AG04449 (cell line): ENCODE measurements at regions of chrX and their contacts with region 1.

Region 1: GRCh38 chrX:41180194-41180908 is 95.1 kb downstream of the USP9X start:
- DNase-seq: peak; percentile 3
- H3K4me3 ChIP-seq: no peak overlapping the region
- CTCF ChIP-seq: peak; percentile 63

Region 2: GRCh38 chrX:41164449-41164848 is 15.9 kb before region 1 on chrX:
- CTCF ChIA-PET with region 1: interaction called, 41 read pairs
- POLR2A ChIA-PET with region 1: no interaction called
- DNase-seq: no peak
- H3K4me3 ChIP-seq: no peak overlapping the region
- CTCF ChIP-seq: no peak

Region 3: DNA sequence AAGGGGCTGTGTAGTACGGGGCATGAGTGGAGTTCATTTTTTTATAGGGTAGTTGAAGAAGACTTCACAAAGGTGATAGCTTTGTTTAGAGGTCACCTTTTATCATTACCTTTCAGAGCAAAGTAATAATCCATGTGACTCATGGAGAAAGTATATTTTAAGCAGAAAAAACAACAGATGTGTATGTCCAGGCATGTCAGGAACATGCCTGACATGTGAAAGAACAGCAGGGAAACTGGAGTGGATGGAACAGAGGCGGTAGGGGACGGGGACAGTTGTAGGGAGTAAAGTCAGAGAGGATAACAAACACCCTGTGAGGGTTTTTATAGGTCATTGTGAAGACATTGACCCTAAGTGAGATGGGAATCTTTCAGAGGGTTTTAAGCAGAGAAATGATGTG is 12.5 kb after region 1 on chrX:
- CTCF ChIA-PET with region 1: interaction called, 13 read pairs
- POLR2A ChIA-PET with region 1: no interaction called
- DNase-seq: no peak
- H3K4me3 ChIP-seq: no peak overlapping the region
- CTCF ChIP-seq: no peak

Region 4: DNA sequence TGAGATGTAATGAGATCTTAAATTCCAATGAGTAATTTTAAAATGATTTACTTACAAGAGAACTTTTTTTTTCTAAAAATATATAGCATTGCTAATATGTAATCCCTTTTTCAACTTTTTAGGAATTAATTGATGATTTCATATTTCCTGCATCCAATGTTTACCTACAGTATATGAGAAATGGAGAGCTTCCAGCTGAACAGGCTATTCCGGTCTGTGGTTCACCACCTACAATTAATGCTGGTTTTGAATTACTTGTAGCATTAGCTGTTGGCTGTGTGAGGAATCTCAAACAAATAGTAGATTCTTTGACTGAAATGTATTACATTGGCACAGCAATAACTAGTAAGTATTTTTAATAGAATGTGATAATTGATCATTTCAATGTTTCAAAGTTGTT is 18.1 kb after region 1 on chrX:
- CTCF ChIA-PET with region 1: interaction called, 13 read pairs
- POLR2A ChIA-PET with region 1: no interaction called
- DNase-seq: no peak
- H3K4me3 ChIP-seq: no peak overlapping the region
- CTCF ChIP-seq: no peak

Region 5: GRCh38 chrX:41259516-41259915 is 79.2 kb after region 1 on chrX:
- CTCF ChIA-PET with region 1: interaction called, 57 read pairs
- POLR2A ChIA-PET with region 1: no interaction called
- DNase-seq: no peak
- H3K4me3 ChIP-seq: no peak overlapping the region
- CTCF ChIP-seq: no peak

Region 6: GRCh38 chrX:41406211-41406610 is 225.9 kb after region 1 on chrX:
- CTCF ChIA-PET with region 1: no interaction called
- POLR2A ChIA-PET with region 1: no interaction called
- DNase-seq: no peak
- H3K4me3 ChIP-seq: no peak overlapping the region
- CTCF ChIP-seq: no peak